BJ (cell line): ENCODE measurements at regions of chr6 and their contacts with region 1.

Region 1: GRCh38 chr6:150891888-150892485 is 26.5 kb downstream of the MTHFD1L start:
- DNase-seq: peak; percentile 52
- H3K4me3 ChIP-seq: no peak overlapping the region
- H3K27me3 ChIP-seq: no peaks in the 10 kb centered on the region
- CTCF ChIP-seq: peak; percentile 77

Region 2: DNA sequence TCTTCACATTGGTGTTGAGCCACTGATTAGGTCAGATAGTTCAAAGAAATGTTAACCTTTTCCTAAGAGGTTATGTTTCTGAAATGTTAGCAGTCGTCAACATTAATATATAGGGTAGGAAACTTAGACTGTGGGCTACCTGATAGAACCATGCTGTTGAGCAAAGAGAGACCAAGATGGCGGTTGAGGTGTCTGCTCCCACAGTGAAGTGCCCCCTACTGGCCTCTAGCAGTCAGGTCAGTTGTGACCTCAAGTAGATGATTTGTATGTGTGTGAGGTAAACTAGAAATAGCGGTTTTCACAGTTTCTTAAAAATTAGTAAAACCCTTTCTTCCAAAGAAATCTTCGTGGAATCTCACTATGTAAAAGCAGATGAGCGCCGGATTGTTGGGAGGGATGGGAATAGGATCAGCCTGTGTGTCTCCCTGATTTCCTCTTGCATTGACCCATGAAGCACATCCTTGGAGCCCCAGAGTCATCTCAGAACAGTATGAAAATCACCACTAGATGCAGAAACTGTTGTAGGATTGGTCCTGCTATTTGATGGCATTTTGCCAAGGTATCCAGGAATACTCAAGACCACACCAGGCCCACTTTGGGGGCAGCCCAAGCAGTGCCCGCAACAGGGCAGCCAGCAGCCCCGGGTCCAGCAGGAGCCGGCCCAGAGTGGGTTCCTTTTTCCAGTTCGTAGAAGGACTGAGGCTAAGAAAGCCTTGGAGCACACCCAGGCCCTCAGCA is 14.0 kb after region 1 on chr6:
- CTCF ChIA-PET with region 1: interaction called, 10 read pairs
- POLR2A ChIA-PET with region 1: no interaction called
- DNase-seq: no peak
- H3K4me3 ChIP-seq: no peak overlapping the region
- H3K27me3 ChIP-seq: no peaks in the 10 kb centered on the region
- CTCF ChIP-seq: 0 out of 2 replicates have a peak, but pooled peaks have one; percentile 16

Region 3: DNA sequence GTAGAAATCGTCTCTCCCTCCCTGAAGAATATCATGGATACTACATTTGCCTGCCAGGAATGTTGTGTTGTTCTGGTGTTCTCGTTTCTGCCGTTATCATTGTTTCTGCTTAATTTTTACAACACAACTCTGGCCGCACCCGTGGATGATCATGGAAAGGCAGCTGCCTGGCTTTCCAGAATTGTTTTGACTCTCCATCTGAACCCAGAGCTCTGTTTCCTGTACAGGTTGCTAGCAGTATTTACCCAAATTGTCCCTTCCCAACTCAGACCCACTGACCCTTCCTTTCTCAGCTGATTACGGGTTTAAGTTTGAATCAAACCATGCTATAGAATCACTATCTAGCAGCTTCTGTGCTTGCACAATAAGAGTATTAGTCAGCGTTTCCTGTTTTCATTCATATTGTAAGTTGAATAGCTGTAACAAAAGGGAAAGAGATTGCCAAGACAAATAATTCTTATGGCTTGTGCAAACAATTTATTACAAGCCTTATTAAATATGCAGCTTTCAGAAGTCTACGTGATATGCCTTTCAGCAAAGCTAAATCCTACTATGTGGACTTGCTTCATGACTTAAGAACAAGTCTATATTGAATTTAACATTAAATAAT is 112.5 kb after region 1 on chr6:
- CTCF ChIA-PET with region 1: interaction called, 13 read pairs
- POLR2A ChIA-PET with region 1: no interaction called
- DNase-seq: peak; percentile 75
- H3K4me3 ChIP-seq: no peak overlapping the region
- H3K27me3 ChIP-seq: no peaks in the 10 kb centered on the region
- CTCF ChIP-seq: no peak

Region 4: GRCh38 chr6:151014404-151015100 is 122.6 kb after region 1 on chr6:
- CTCF ChIA-PET with region 1: interaction called, 20 read pairs
- POLR2A ChIA-PET with region 1: no interaction called
- DNase-seq: no peak
- H3K4me3 ChIP-seq: no peak overlapping the region
- H3K27me3 ChIP-seq: no peaks in the 10 kb centered on the region
- CTCF ChIP-seq: peak; percentile 95

Region 5: GRCh38 chr6:151330134-151330696 is 438.2 kb after region 1 on chr6:
- CTCF ChIA-PET with region 1: interaction called, 107 read pairs
- POLR2A ChIA-PET with region 1: interaction called, 5 read pairs
- DNase-seq: peak; percentile 51
- H3K4me3 ChIP-seq: no peak overlapping the region
- H3K27me3 ChIP-seq: no peaks in the 10 kb centered on the region
- CTCF ChIP-seq: no peak